ENCODE measurements at regions of chr11 and their contacts with region 1.

Region 1: DNA sequence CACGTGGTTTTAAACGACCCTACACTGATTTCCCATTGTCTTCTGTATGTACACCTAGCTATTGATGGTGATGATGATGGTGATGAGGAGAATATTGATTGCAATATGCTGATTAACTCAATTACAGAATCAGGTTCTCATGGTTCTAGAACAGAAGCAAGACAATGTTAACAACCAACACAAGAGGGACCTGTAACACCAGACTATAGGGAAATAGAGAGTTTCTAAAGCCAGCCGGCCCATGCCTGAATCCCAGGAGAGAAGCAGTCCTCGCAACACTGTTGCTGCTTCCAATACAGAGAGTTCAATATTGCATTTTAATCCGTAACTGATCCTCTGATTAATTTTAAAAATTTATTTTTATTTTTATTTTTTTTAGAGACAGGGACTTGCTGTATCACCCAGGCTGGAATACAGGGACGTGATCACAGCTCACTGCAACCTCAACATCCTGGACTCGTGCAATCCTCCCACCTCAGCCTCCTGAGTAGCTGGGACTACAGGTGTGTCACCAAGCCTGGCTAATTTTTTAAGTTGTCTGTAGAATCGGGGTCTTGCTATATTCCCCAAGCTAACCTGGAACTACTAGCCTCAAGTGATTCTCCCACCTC is 22.2 kb upstream of the UBASH3B start:
- DNase-seq: peak; percentile 70
- H3K4me3 ChIP-seq: no peak overlapping the region
- H3K27ac ChIP-seq: no peak overlapping the region
- H3K4me1 ChIP-seq: no peaks in the 10 kb centered on the region
- H3K27me3 ChIP-seq: no peaks in the 10 kb centered on the region
- CTCF ChIP-seq: peak; percentile 25 to 61 (median 39)
- POLR2A ChIP-seq: no peak

Region 2: GRCh38 chr11:122209619-122210366 is 423.5 kb before region 1 on chr11:
- intact Hi-C with region 1: no loop called
- DNase-seq: peak; percentile 90
- H3K4me3 ChIP-seq: no peak overlapping the region
- H3K27ac ChIP-seq: peak overlapping the region in 1 of 2 donors; percentile 85
- H3K4me1 ChIP-seq: peaks cover 37% of the 10 kb centered on the region
- H3K27me3 ChIP-seq: no peaks in the 10 kb centered on the region
- CTCF ChIP-seq: peak in 1 of 3 experiments; percentile 15
- POLR2A ChIP-seq: no peak

Region 3: GRCh38 chr11:122422707-122423106 is 210.6 kb before region 1 on chr11:
- intact Hi-C with region 1: no loop called
- DNase-seq: no peak
- H3K4me3 ChIP-seq: no peak overlapping the region
- H3K27ac ChIP-seq: no peak overlapping the region
- H3K4me1 ChIP-seq: no peaks in the 10 kb centered on the region
- H3K27me3 ChIP-seq: no peaks in the 10 kb centered on the region
- CTCF ChIP-seq: no peak
- POLR2A ChIP-seq: no peak

Region 4: DNA sequence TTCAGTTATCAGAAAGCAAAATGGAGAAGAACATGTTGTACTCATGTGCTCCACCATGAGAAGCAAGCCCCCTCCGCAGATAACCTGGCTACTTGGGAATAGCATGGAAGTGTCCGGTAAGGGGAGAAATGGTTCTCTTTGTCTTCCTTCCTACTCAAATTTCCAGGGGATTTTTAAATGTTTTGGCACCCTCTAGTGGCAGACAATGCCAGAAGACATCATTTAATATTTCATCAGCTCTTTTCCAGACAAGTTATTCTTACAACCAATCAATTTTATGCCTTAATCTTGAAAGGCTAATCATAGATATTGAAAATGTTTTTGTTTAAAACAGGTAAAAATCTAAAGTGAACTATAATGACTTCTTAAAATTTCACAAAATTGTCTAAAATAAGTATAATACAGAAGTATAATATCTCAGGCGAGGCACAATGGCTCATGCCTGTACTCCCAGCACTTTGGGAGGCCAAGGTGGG is 220.7 kb after region 1 on chr11:
- intact Hi-C with region 1: loop called (anchors 10 kb)
- DNase-seq: peak; percentile 76
- H3K4me3 ChIP-seq: no peak overlapping the region
- H3K27ac ChIP-seq: no peak overlapping the region
- H3K4me1 ChIP-seq: no peaks in the 10 kb centered on the region
- H3K27me3 ChIP-seq: no peaks in the 10 kb centered on the region
- CTCF ChIP-seq: peak; percentile 68 to 73 (median 72)
- POLR2A ChIP-seq: no peak

Measured in testis (tissue), 5 donors.